Heart left ventricle (tissue), 16 donors: ENCODE measurements at regions of chr20 and their contacts with region 1.

Region 1: DNA sequence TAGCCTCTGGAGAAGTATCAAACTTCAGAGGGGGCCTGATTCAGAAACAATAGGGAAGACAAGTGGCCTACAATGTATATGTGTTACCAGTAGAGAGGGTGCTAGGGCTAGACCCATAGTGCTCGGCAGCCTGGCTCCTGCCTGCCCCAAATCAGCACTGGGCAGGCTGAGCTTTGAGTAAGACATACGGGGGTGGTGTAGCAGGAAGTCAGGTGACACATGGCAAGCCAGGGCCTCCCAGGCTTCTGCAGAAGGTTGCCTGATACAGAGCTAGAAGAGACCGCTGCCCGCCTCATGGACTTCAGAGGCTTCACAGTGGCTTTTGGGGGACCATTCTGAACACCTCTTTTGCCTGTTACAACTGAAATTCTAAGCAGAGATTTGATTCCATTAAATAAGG is 43.4 kb downstream of the RALY start:
- DNase-seq: peak in 2 of 5 donors; percentile 25 to 36
- ATAC-seq: peak; percentile 32 to 51 (median 50)
- H3K4me3 ChIP-seq: no peak overlapping the region
- H3K27ac ChIP-seq: peak overlapping the region in 2 of 12 donors; percentile 5 to 11
- H3K4me1 ChIP-seq: peaks cover 9 to 70% (median 68%) of the 10 kb centered on the region in 12 donors
- H3K27me3 ChIP-seq: no peaks in the 10 kb centered on the region
- CTCF ChIP-seq: no peak
- POLR2A ChIP-seq: no peak

Region 2: GRCh38 chr20:33862709-33863403 is 174.3 kb before region 1 on chr20:
- intact Hi-C with region 1: no loop called
- DNase-seq: peak in 4 of 5 donors; percentile 33 to 53 (median 40)
- ATAC-seq: peak; percentile 55 to 83 (median 78)
- H3K4me3 ChIP-seq: peak overlapping the region in 5 of 12 donors; percentile 15 to 36 (median 16)
- H3K27ac ChIP-seq: no peak overlapping the region
- H3K4me1 ChIP-seq: peaks cover 0 to 25% (median 14%) of the 10 kb centered on the region in 12 donors
- H3K27me3 ChIP-seq: no peaks in the 10 kb centered on the region
- CTCF ChIP-seq: peak; percentile 49 to 76 (median 65)
- POLR2A ChIP-seq: no peak

Region 3: DNA sequence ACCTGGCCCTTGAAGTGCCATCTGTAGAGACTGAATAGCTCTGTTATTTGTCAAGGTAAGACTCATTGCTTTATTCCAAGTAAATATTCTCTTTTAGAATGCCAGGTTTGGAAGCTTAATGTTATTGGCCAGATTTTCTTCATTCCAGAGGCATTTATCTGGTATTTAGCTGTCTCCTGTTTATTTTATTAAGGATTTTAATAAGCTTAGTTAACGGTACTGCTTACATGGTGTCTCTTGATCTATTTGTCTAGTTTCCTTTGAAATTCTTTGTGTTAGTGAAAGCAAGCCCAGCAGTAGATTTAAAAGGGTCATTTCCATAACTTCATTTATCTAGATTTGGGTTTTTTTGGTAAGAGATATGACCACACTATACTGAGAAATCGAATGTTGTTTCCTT is 35.7 kb before region 1 on chr20:
- intact Hi-C with region 1: loop called in 5 of 10 experiments (anchors 5 to 10 kb)
- DNase-seq: no peak
- ATAC-seq: no peak
- H3K4me3 ChIP-seq: no peak overlapping the region
- H3K27ac ChIP-seq: no peak overlapping the region
- H3K4me1 ChIP-seq: peaks cover 0 to 85% (median 55%) of the 10 kb centered on the region in 12 donors
- H3K27me3 ChIP-seq: no peaks in the 10 kb centered on the region
- CTCF ChIP-seq: no peak
- POLR2A ChIP-seq: no peak

Region 4: GRCh38 chr20:34491226-34491931 is 454.3 kb after region 1 on chr20:
- intact Hi-C with region 1: no loop called
- DNase-seq: no peak
- ATAC-seq: no peak
- H3K4me3 ChIP-seq: no peak overlapping the region
- H3K27ac ChIP-seq: no peak overlapping the region
- H3K4me1 ChIP-seq: no peaks in the 10 kb centered on the region
- H3K27me3 ChIP-seq: no peaks in the 10 kb centered on the region
- CTCF ChIP-seq: no peak
- POLR2A ChIP-seq: no peak

Region 5: GRCh38 chr20:35039146-35039545 is 1002.0 kb after region 1 on chr20:
- intact Hi-C with region 1: no loop called
- DNase-seq: no peak
- ATAC-seq: peak in 2 of 4 donors; percentile 33 to 44
- H3K4me3 ChIP-seq: no peak overlapping the region
- H3K27ac ChIP-seq: no peak overlapping the region
- H3K4me1 ChIP-seq: peaks cover 0 to 14% (median 0%) of the 10 kb centered on the region in 12 donors
- H3K27me3 ChIP-seq: no peaks in the 10 kb centered on the region
- CTCF ChIP-seq: no peak
- POLR2A ChIP-seq: no peak